SK-N-SH (cell line): ENCODE measurements at regions of chr7 and their contacts with region 1.

Region 1: GRCh38 chr7:102450242-102450641 is 14.4 kb downstream of the ALKBH4 start:
- DNase-seq: no peak
- H3K4me3 ChIP-seq: no peak overlapping the region
- H3K27ac ChIP-seq: no peak overlapping the region; a peak in 1 of 4 replicates
- H3K4me1 ChIP-seq: peaks cover 0 to 10% of the 10 kb centered on the region in 2 experiments; a peak in 1 of 4 replicates
- H3K27me3 ChIP-seq: no peaks in the 10 kb centered on the region
- CTCF ChIP-seq: peak; percentile 40
- EP300 ChIP-seq: no peak
- RAD21 ChIP-seq: peak; percentile 52

Region 2: GRCh38 chr7:101856473-101857357 is 593.5 kb before region 1 on chr7:
- CTCF ChIA-PET with region 1: no interaction called
- POLR2A ChIA-PET with region 1: no interaction called
- DNase-seq: peak; percentile 98
- H3K4me3 ChIP-seq: peak overlapping the region; percentile 37 to 54
- H3K27ac ChIP-seq: peak overlapping the region; percentile 86 to 87
- H3K4me1 ChIP-seq: peaks cover 15 to 18% of the 10 kb centered on the region in 2 experiments
- H3K27me3 ChIP-seq: no peaks in the 10 kb centered on the region
- CTCF ChIP-seq: peak; percentile 68
- EP300 ChIP-seq: peak in 1 of 2 experiments; percentile 78; a peak in 2 of 4 replicates
- RAD21 ChIP-seq: peak; percentile 77

Region 3: GRCh38 chr7:102193806-102194205 is 256.4 kb before region 1 on chr7:
- CTCF ChIA-PET with region 1: no interaction called
- POLR2A ChIA-PET with region 1: no interaction called
- DNase-seq: no peak
- H3K4me3 ChIP-seq: no peak overlapping the region
- H3K27ac ChIP-seq: no peak overlapping the region
- H3K4me1 ChIP-seq: peaks cover 0 to 11% of the 10 kb centered on the region in 2 experiments; a peak in 1 of 4 replicates
- H3K27me3 ChIP-seq: no peaks in the 10 kb centered on the region
- CTCF ChIP-seq: no peak
- EP300 ChIP-seq: no peak
- RAD21 ChIP-seq: no peak

Region 4: DNA sequence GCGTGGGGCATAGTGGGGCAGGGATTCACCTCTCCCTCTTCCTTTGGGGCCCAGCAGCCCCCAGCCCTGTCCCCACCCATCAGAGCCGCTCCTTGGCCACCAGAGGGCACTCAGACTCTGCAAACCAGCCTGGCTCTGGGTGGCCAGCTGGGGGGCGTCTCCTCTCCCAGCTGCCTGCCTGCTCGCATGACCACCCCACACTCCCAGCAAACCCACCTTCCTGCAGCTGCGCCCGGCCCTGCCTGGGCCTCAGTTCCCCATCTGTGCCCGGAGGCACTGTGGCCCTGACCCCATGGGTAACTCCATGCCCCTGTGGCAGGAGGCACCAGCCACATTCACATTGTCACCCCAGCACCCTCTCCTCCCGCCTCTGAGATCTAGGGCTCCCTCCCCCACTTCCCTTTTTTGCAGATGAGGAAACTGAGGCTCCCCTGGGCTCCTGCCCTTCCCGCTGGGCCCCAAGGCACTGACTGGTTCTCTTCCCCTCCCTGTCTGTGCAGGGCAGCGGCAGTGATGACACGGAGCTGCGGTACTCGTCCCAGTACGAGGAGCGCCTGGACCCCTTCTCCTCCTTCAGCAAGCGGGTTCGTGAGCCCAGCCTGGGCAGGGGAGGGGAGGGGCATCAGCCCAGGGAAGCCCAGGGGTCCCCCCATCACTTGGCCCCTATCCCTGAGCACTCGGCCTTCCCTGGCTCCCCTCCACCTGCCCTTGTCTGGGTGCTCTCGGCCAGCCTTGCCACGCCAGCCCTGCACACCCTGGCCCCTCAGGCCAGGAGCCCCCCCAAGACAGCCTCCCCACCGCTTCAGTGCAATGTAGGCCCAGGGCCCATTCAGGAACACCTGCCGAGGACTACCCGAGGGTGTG is 170.5 kb before region 1 on chr7:
- CTCF ChIA-PET with region 1: interaction called, 21 read pairs
- POLR2A ChIA-PET with region 1: no interaction called
- DNase-seq: peak; percentile 98
- H3K4me3 ChIP-seq: no peak overlapping the region; a peak in 1 of 4 replicates
- H3K27ac ChIP-seq: no peak overlapping the region; a peak in 1 of 4 replicates
- H3K4me1 ChIP-seq: peaks cover 0 to 6% of the 10 kb centered on the region in 2 experiments; a peak in 1 of 4 replicates
- H3K27me3 ChIP-seq: no peaks in the 10 kb centered on the region
- CTCF ChIP-seq: peak; percentile 99
- EP300 ChIP-seq: no peak
- RAD21 ChIP-seq: peak; percentile 94

Region 5: GRCh38 chr7:102404005-102404861 is 46.0 kb before region 1 on chr7:
- CTCF ChIA-PET with region 1: interaction called, 36 read pairs
- POLR2A ChIA-PET with region 1: interaction called, 5 read pairs
- DNase-seq: peak; percentile 82
- H3K4me3 ChIP-seq: no peak overlapping the region
- H3K27ac ChIP-seq: no peak overlapping the region
- H3K4me1 ChIP-seq: no peaks in the 10 kb centered on the region
- H3K27me3 ChIP-seq: no peaks in the 10 kb centered on the region
- CTCF ChIP-seq: peak; percentile 79
- EP300 ChIP-seq: no peak
- RAD21 ChIP-seq: peak; percentile 77

Region 6: DNA sequence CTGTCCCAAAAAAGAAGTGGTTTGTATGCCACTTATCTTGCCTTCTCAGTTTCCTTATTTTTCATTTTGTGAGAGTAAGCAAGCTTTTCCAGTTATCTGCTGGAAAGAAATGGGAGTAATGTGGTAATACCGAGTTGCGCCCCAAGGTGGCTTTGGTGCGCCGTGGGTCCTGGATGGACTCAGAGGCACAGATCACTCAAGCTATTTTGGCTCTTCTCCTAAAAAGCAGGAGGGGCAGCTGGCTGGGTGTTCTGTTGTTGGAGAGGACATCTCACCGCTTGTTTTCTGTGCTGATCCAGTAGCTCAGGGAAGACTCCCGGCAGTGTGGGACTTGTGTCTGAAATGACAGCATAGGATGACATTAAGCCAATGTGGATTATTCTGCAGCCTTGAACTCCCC is 37.7 kb before region 1 on chr7:
- CTCF ChIA-PET with region 1: interaction called, 26 read pairs
- POLR2A ChIA-PET with region 1: no interaction called
- DNase-seq: peak; percentile 73
- H3K4me3 ChIP-seq: no peak overlapping the region
- H3K27ac ChIP-seq: no peak overlapping the region
- H3K4me1 ChIP-seq: peaks cover 0 to 5% of the 10 kb centered on the region in 2 experiments; a peak in 1 of 4 replicates
- H3K27me3 ChIP-seq: no peaks in the 10 kb centered on the region
- CTCF ChIP-seq: peak; percentile 60
- EP300 ChIP-seq: no peak
- RAD21 ChIP-seq: peak; percentile 73

Region 7: GRCh38 chr7:102433219-102434038 is 16.8 kb before region 1 on chr7 and contains the start of gene ORAI2:
- CTCF ChIA-PET with region 1: interaction called, 40 read pairs
- POLR2A ChIA-PET with region 1: interaction called, 4 read pairs
- DNase-seq: peak; percentile 100
- H3K4me3 ChIP-seq: peak within 1 kb of the TSS; percentile 63 to 94
- H3K27ac ChIP-seq: peak within 1 kb of the TSS; percentile 60 to 74; a peak in 3 of 4 replicates
- H3K4me1 ChIP-seq: peaks cover 8 to 11% of the 10 kb centered on the region in 2 experiments; a peak in 2 of 4 replicates
- H3K27me3 ChIP-seq: no peaks in the 10 kb centered on the region
- CTCF ChIP-seq: no peak
- EP300 ChIP-seq: no peak
- RAD21 ChIP-seq: no peak
- polyA plus RNA-seq, gene ORAI2: 78.7 and 85.8 TPM in 2 replicates

Region 8: GRCh38 chr7:102440078-102440795 is 10.0 kb before region 1 on chr7:
- CTCF ChIA-PET with region 1: interaction called, 40 read pairs
- POLR2A ChIA-PET with region 1: interaction called, 8 read pairs
- DNase-seq: peak; percentile 40
- H3K4me3 ChIP-seq: no peak overlapping the region
- H3K27ac ChIP-seq: peak overlapping the region; percentile 41 to 69
- H3K4me1 ChIP-seq: peaks cover 7 to 12% of the 10 kb centered on the region in 2 experiments; a peak in 2 of 4 replicates
- H3K27me3 ChIP-seq: no peaks in the 10 kb centered on the region
- CTCF ChIP-seq: no peak
- EP300 ChIP-seq: no peak; a peak in 1 of 4 replicates
- RAD21 ChIP-seq: no peak

Region 9: GRCh38 chr7:102464577-102465280 is 14.5 kb after region 1 on chr7 and contains the starts of genes ALKBH4 and LRWD1:
- CTCF ChIA-PET with region 1: interaction called, 15 read pairs
- POLR2A ChIA-PET with region 1: interaction called, 12 read pairs
- DNase-seq: peak; percentile 100
- H3K4me3 ChIP-seq: peak within 1 kb of the TSS; percentile 86 to 99
- H3K27ac ChIP-seq: peak within 1 kb of the TSS; percentile 67 to 79
- H3K4me1 ChIP-seq: peaks cover 5 to 11% of the 10 kb centered on the region in 2 experiments; a peak in 2 of 4 replicates
- H3K27me3 ChIP-seq: no peaks in the 10 kb centered on the region
- CTCF ChIP-seq: peak; percentile 16; the same call in 1 of the 2 replicates
- EP300 ChIP-seq: no peak; a peak in 2 of 4 replicates
- RAD21 ChIP-seq: no peak
- polyA plus RNA-seq, gene ALKBH4: 13.7 and 18.1 TPM in 2 replicates
- polyA plus RNA-seq, gene LRWD1: 44.9 and 53.2 TPM in 2 replicates